Aorta (tissue), 5 donors: ENCODE measurements at regions of chr9 and their contacts with region 1.

Region 1: DNA sequence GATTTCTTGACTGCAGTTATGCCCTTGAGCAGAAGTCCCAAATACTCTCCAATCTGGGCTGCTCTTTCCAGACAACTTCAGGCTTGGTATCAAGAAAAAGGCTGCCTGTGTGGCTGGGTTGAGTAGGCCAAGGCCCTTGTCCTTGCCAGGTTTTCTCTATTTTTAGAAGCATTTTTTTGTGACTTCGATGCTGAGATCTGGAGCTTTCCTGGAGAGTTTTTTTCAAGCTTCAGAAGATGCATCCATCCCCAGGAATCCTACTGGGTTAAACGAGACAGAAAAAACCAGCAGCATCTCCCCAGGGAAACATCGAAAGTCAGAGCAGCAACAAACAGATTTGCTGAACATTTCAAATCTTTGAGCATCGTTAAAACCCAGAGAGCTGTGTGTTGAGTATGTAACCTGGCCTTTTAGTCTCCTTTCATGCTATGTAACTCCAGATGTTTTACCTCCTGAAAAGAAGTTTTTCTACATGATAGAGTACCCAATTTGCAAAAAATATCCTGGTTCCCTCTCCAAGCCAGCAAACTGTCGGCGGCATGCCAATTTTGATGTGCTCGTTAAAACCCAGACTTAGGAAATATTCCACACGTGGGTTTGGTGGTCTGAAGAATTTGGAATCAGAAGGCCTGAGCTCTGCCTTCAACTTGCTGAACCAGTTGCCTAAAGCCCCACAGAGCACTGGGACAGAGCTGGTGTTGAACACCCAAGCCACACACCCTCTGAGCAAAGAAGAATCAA is 98.1 kb upstream of the ALDH1B1 start:
- DNase-seq: no peak
- ATAC-seq: peak; percentile 56
- H3K4me3 ChIP-seq: no peak overlapping the region
- H3K27ac ChIP-seq: no peak overlapping the region
- H3K4me1 ChIP-seq: peaks cover 0 to 9% of the 10 kb centered on the region in 2 donors
- H3K27me3 ChIP-seq: no peaks in the 10 kb centered on the region

Region 2: GRCh38 chr9:38311382-38312270 is 17.2 kb after region 1 on chr9:
- intact Hi-C with region 1: loop called in 1 of 2 experiments (anchors 2 kb)
- DNase-seq: peak in 1 of 2 donors; percentile 69
- ATAC-seq: peak; percentile 83
- H3K4me3 ChIP-seq: peak overlapping the region; percentile 18 to 60
- H3K27ac ChIP-seq: peak overlapping the region; percentile 14 to 82
- H3K4me1 ChIP-seq: no peaks in the 10 kb centered on the region
- H3K27me3 ChIP-seq: no peaks in the 10 kb centered on the region